Panc1 (cell line): ENCODE measurements at regions of chr14 and their contacts with region 1.

Region 1: DNA sequence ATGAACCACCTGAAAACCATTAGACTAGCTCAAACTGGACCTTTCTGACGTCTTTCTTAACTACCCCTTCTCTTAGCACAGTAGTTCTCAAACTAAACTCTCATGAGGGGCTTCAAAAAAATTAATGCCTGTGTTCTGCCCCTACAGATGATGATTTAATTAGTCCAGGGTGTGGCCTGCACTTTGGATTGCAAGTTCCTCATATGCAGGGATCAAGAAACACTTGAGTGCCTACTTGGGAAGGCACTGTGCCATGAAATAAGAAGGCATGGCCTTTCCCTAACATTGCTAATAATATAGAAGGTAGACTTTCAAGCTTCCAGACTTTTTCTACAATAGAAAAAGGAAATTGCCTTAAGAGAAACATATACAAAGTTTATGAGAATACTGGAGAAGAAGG is 22.8 kb upstream of the KLHDC2 start:
- DNase-seq: no peak
- ATAC-seq: no peak
- H3K4me3 ChIP-seq: no peak overlapping the region
- H3K27ac ChIP-seq: no peak overlapping the region
- H3K4me1 ChIP-seq: no peaks in the 10 kb centered on the region
- H3K27me3 ChIP-seq: no peaks in the 10 kb centered on the region
- CTCF ChIP-seq: no peak

Region 2: GRCh38 chr14:49774106-49774505 is 28.9 kb after region 1 on chr14:
- CTCF ChIA-PET with region 1: no interaction called
- POLR2A ChIA-PET with region 1: interaction called, 17 read pairs
- in situ Hi-C with region 1: no loop called
- intact Hi-C with region 1: no loop called
- DNase-seq: no peak
- ATAC-seq: no peak
- H3K4me3 ChIP-seq: no peak overlapping the region
- H3K27ac ChIP-seq: no peak overlapping the region
- H3K4me1 ChIP-seq: peaks cover 20% of the 10 kb centered on the region
- H3K27me3 ChIP-seq: no peaks in the 10 kb centered on the region
- CTCF ChIP-seq: no peak

Region 3: GRCh38 chr14:49828640-49829039 is 83.4 kb after region 1 on chr14:
- CTCF ChIA-PET with region 1: no interaction called
- POLR2A ChIA-PET with region 1: no interaction called
- in situ Hi-C with region 1: no loop called
- intact Hi-C with region 1: no loop called
- DNase-seq: no peak
- ATAC-seq: no peak
- H3K4me3 ChIP-seq: no peak overlapping the region
- H3K27ac ChIP-seq: no peak overlapping the region
- H3K4me1 ChIP-seq: no peaks in the 10 kb centered on the region
- H3K27me3 ChIP-seq: no peaks in the 10 kb centered on the region
- CTCF ChIP-seq: no peak